ENCODE measurements at regions of chr12 and their contacts with region 1.

Region 1: GRCh38 chr12:115752913-115753726 is 524.4 kb downstream of the MED13L start:
- DNase-seq: peak; percentile 38 to 62
- H3K4me3 ChIP-seq: no peak overlapping the region
- H3K4me3 Mint-ChIP-seq: no peak overlapping the region
- H3K27ac Mint-ChIP-seq: no peak overlapping the region
- H3K4me1 ChIP-seq: no peaks in the 10 kb centered on the region; the same call in 1 of the 2 replicates
- H3K4me1 Mint-ChIP-seq: no peaks in the 10 kb centered on the region
- H3K27me3 ChIP-seq: no peaks in the 10 kb centered on the region
- H3K27me3 Mint-ChIP-seq: peaks cover 7% of the 10 kb centered on the region
- CTCF ChIP-seq: peak; percentile 47 to 67

Region 2: DNA sequence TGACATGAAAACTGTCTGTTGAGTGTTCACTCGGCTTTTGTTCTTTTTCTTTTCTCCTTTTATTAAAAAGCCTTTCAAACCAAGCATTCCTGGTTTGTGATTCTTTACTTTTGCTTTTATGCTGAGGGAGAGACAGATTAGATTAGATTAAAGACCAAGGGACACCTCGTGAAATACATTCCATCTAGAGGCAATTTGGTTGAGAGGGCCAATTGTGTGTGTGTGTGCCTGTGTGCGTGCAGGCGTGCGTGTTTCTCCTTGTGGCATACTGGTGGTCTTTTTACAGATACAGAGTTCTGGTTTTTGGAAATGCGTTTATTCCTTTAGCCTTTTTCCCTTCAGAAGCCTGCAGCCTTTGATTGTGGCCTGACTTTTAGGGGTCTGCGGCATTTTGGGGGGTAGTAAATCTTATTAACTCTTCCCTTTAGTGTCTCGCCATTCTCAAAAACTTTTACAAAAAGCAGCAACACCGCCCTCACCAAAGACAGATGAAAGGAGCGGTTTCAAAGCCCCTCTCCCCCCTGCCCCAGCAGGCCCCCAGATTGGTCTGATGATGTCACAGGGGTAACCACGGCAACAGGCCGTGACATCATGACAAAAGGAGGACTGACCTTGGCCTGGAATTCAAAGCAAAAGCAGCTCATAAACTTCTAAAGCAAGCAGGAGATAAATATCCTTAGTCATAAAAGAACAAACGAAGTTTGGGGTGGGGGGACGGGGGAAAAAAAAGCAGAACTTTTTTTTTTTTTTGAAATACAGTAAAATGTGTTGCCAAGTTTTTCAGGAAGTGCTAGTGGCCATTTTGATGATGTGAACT is 985.0 kb before region 1 on chr12:
- CTCF ChIA-PET with region 1: interaction called, 10 read pairs
- POLR2A ChIA-PET with region 1: no interaction called
- intact Hi-C with region 1: no loop called
- DNase-seq: peak; percentile 51 to 67
- H3K4me3 ChIP-seq: no peak overlapping the region
- H3K4me3 Mint-ChIP-seq: peak overlapping the region; percentile 2
- H3K27ac Mint-ChIP-seq: peak overlapping the region; percentile 99
- H3K4me1 ChIP-seq: peaks cover 34% of the 10 kb centered on the region
- H3K4me1 Mint-ChIP-seq: peaks cover 17% of the 10 kb centered on the region
- H3K27me3 ChIP-seq: no peaks in the 10 kb centered on the region
- H3K27me3 Mint-ChIP-seq: no peaks in the 10 kb centered on the region
- CTCF ChIP-seq: no peak

Region 3: GRCh38 chr12:115648463-115648862 is 104.7 kb before region 1 on chr12:
- CTCF ChIA-PET with region 1: no interaction called
- POLR2A ChIA-PET with region 1: no interaction called
- intact Hi-C with region 1: loop called (anchors 5 kb)
- DNase-seq: no peak
- H3K4me3 ChIP-seq: no peak overlapping the region
- H3K4me3 Mint-ChIP-seq: no peak overlapping the region
- H3K27ac Mint-ChIP-seq: no peak overlapping the region
- H3K4me1 ChIP-seq: peaks cover 5% of the 10 kb centered on the region; the same call in 1 of the 2 replicates
- H3K4me1 Mint-ChIP-seq: no peaks in the 10 kb centered on the region
- H3K27me3 ChIP-seq: no peaks in the 10 kb centered on the region
- H3K27me3 Mint-ChIP-seq: no peaks in the 10 kb centered on the region
- CTCF ChIP-seq: no peak

Measured in Caco-2 (cell line).